K562 (cell line): ENCODE measurements at regions of chr2 and their contacts with region 1.

Region 1: GRCh38 chr2:203394519-203395227 is 66.5 kb downstream of the ABI2 start:
- DNase-seq: peak; percentile 17 to 64 (median 44)
- ATAC-seq: peak; percentile 98
- H3K4me3 ChIP-seq: no peak overlapping the region
- H3K27ac ChIP-seq: no peak overlapping the region
- H3K4me1 ChIP-seq: no peaks in the 10 kb centered on the region; a peak in 1 of 5 replicates
- H3K27me3 ChIP-seq: no peaks in the 10 kb centered on the region
- CTCF ChIP-seq: peak; percentile 73 to 79 (median 75)
- EP300 ChIP-seq: no peak
- POLR2A ChIP-seq: no peak
- RAD21 ChIP-seq: peak; percentile 60 to 80

Region 2: DNA sequence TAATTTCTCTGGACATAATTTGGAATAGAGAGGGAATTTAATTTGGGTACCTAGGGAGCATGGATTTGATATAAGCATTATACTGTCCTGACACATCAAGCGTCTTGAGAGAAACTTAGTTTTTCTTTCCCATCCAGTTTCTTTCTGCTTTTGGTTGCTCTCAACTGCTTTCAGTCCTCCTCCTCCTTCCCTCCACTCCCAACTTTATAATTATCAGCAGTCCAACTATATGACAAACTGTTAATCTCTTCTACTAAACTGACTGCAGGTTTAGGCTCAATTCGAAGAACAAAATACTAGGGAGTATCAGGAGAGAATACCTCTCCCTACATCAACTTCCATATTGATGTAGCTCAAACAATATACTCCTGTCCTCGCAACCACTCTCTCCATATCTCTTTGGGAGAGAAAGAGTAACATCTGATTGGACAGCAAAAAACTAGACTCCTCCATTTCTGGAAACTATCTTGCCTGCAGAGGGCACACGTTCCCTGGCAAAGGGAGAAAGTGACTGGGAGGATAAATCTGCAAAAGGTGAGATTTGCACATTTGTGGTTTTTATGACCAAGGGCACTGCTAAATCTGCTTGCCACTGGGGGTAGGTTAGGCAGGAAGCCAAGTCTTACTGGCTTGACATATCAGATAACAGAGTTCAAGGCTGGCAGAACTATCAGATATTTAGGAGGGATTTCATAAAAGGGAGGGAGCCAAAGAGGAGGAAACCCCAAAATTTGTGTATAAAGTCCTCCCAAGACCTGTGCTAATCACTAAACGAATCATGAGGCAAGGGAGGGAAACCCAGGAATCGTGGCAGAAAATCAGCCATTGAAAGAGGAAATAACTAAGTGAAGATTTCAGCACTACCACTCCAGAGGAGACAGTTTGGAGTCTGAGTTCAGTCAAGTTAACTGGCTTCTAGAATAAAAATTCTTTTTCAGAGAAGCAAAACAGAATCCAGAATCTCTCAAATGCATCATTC is 563.1 kb before region 1 on chr2:
- CTCF ChIA-PET with region 1: no interaction called
- POLR2A ChIA-PET with region 1: no interaction called
- in situ Hi-C with region 1: no loop called
- intact Hi-C with region 1: loop called (anchors 5 kb)
- DNase-seq: peak; percentile 21 to 62 (median 41)
- ATAC-seq: peak; percentile 90
- H3K4me3 ChIP-seq: no peak overlapping the region
- H3K27ac ChIP-seq: no peak overlapping the region
- H3K4me1 ChIP-seq: no peaks in the 10 kb centered on the region
- H3K27me3 ChIP-seq: no peaks in the 10 kb centered on the region
- CTCF ChIP-seq: peak; percentile 56 to 76 (median 59); a peak in 5 of 6 replicates
- EP300 ChIP-seq: no peak
- POLR2A ChIP-seq: no peak
- RAD21 ChIP-seq: peak; percentile 31 to 87

Region 3: GRCh38 chr2:203225423-203226039 is 169.1 kb before region 1 on chr2:
- CTCF ChIA-PET with region 1: no interaction called
- POLR2A ChIA-PET with region 1: no interaction called
- in situ Hi-C with region 1: no loop called
- intact Hi-C with region 1: loop called (anchors 1 kb)
- DNase-seq: peak in 1 of 4 experiments; percentile 35
- ATAC-seq: peak; percentile 85
- H3K4me3 ChIP-seq: no peak overlapping the region
- H3K27ac ChIP-seq: no peak overlapping the region
- H3K4me1 ChIP-seq: no peaks in the 10 kb centered on the region
- H3K27me3 ChIP-seq: no peaks in the 10 kb centered on the region
- CTCF ChIP-seq: peak; percentile 57 to 62 (median 61)
- EP300 ChIP-seq: no peak
- POLR2A ChIP-seq: no peak
- RAD21 ChIP-seq: peak in 1 of 2 experiments; percentile 61; a peak in 2 of 4 replicates

Region 4: GRCh38 chr2:203858176-203858575 is 463.5 kb after region 1 on chr2:
- CTCF ChIA-PET with region 1: no interaction called
- POLR2A ChIA-PET with region 1: no interaction called
- in situ Hi-C with region 1: no loop called
- intact Hi-C with region 1: no loop called
- DNase-seq: no peak
- ATAC-seq: no peak
- H3K4me3 ChIP-seq: no peak overlapping the region
- H3K27ac ChIP-seq: no peak overlapping the region
- H3K4me1 ChIP-seq: no peaks in the 10 kb centered on the region
- H3K27me3 ChIP-seq: no peaks in the 10 kb centered on the region; a peak in 1 of 5 replicates
- CTCF ChIP-seq: no peak
- EP300 ChIP-seq: no peak
- POLR2A ChIP-seq: no peak
- RAD21 ChIP-seq: no peak